PC-3 (cell line): ENCODE measurements at regions of chr1 and their contacts with region 1.

Region 1: DNA sequence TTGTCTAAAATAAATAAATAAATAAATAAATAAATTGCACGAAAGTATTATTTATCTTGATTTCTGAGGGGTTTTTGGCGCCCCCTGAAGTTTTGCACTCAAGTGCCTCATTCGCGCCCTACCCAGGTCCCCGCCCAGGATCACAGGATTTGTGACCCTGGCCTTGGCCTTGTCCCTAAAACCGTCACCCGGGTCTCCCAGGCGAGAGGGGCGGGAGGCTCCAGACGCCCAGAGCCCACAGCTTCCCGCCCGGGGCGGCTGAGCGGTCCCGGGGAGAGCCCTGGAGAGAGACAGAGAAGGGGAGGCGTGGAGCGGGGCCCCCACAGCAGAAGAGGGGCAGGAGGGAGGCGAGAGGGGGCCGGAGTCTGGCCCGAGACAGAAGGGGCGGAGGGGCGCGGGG is 91.8 kb upstream of the CASZ1 start:
- DNase-seq: no peak
- ATAC-seq: no peak
- H3K4me3 ChIP-seq: no peak overlapping the region
- H3K27ac ChIP-seq: no peak overlapping the region
- H3K4me1 ChIP-seq: peaks cover 15% of the 10 kb centered on the region
- H3K27me3 ChIP-seq: no peaks in the 10 kb centered on the region
- CTCF ChIP-seq: no peak

Region 2: DNA sequence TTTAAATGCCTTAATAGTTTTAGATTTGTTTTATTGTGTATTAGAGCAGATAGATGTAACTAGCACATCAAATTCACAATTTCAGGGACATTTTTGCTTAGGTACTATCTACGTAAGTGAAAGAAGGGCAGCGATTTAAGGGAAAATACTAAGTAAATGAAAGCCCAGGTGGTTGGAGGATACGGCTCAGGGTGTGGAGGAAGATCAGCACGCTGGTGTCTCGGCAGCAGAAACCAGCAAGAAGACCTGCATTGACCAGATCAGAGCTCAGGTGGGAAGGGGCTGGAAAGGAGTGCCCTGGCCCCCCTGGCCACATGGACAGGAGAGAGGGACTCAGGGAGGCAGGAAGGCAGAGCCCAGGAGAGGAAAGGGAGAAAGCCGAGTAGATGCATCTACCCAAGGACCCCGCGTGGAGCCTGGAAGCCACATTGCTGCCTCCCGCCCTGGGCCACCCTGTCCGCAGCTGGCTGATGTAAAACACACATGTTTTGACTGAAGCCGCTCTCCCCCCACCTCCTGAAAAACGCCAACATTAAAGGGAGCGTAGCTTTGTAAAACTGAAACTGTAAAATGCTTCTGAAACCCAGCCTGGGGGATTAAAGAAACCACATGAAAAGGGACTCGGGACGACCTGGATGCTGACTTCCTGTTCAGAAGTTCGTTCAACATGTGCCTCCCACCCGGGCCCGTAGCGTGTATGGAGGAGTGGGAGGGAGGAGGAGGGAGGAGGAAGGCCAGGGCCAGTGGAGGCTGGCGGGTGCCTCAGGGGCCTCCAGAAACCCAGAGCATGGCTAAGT is 51.6 kb after region 1 on chr1:
- CTCF ChIA-PET with region 1: no interaction called
- POLR2A ChIA-PET with region 1: no interaction called
- intact Hi-C with region 1: no loop called
- DNase-seq: no peak
- ATAC-seq: no peak
- H3K4me3 ChIP-seq: no peak overlapping the region
- H3K27ac ChIP-seq: no peak overlapping the region
- H3K4me1 ChIP-seq: 0 out of 2 replicates have a peak, but pooled peaks cover 4% of the 10 kb centered on the region
- H3K27me3 ChIP-seq: no peaks in the 10 kb centered on the region
- CTCF ChIP-seq: no peak

Region 3: GRCh38 chr1:10950316-10951172 is 62.3 kb after region 1 on chr1:
- CTCF ChIA-PET with region 1: no interaction called
- POLR2A ChIA-PET with region 1: interaction called, 18 read pairs
- intact Hi-C with region 1: no loop called
- DNase-seq: no peak
- ATAC-seq: no peak
- H3K4me3 ChIP-seq: no peak overlapping the region
- H3K27ac ChIP-seq: no peak overlapping the region
- H3K4me1 ChIP-seq: no peaks in the 10 kb centered on the region
- H3K27me3 ChIP-seq: no peaks in the 10 kb centered on the region
- CTCF ChIP-seq: no peak

Region 4: GRCh38 chr1:11429226-11429625 is 540.9 kb after region 1 on chr1:
- CTCF ChIA-PET with region 1: no interaction called
- POLR2A ChIA-PET with region 1: interaction called, 35 read pairs
- intact Hi-C with region 1: no loop called
- DNase-seq: no peak
- ATAC-seq: no peak
- H3K4me3 ChIP-seq: no peak overlapping the region
- H3K27ac ChIP-seq: no peak overlapping the region
- H3K4me1 ChIP-seq: no peaks in the 10 kb centered on the region
- H3K27me3 ChIP-seq: peaks cover 21% of the 10 kb centered on the region
- CTCF ChIP-seq: no peak